ENCODE measurements at regions of chr1 and their contacts with region 1.

Region 1: GRCh38 chr1:241531195-241532161 is 700 bp upstream of the KMO start:
- DNase-seq: no peak
- H3K4me3 Mint-ChIP-seq: peak overlapping the region; percentile 94
- H3K27ac Mint-ChIP-seq: peak overlapping the region; percentile 94
- H3K4me1 Mint-ChIP-seq: peaks cover 22% of the 10 kb centered on the region
- H3K27me3 Mint-ChIP-seq: peaks cover 22% of the 10 kb centered on the region

Region 2: DNA sequence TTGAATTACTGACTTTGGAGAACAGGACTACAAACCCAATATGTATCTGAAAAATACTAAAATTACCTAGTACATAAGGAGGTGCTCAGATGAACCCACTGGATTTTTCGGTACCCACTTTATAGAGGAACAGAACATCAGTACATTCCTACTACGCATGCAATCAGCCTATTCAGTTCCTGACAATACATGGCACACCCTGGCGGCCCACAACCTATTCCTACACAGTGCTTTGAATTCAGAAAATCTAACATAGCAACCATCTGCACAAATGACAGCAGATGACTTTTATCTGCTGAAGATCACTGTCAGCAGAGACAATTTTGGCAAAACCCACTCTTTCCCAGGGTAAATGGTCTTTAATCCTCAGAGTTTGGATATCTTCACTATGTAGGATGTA is 662.4 kb before region 1 on chr1:
- intact Hi-C with region 1: no loop called
- DNase-seq: no peak
- H3K4me3 Mint-ChIP-seq: no peak overlapping the region
- H3K27ac Mint-ChIP-seq: no peak overlapping the region
- H3K4me1 Mint-ChIP-seq: no peaks in the 10 kb centered on the region
- H3K27me3 Mint-ChIP-seq: no peaks in the 10 kb centered on the region

Region 3: GRCh38 chr1:241519308-241520079 is 12.0 kb before region 1 on chr1 and contains the start of gene FH:
- intact Hi-C with region 1: loop called (anchors 2 kb)
- DNase-seq: peak; percentile 92
- H3K4me3 Mint-ChIP-seq: peak within 1 kb of the TSS; percentile 90
- H3K27ac Mint-ChIP-seq: peak within 1 kb of the TSS; percentile 79
- H3K4me1 Mint-ChIP-seq: peaks cover 21% of the 10 kb centered on the region
- H3K27me3 Mint-ChIP-seq: peaks cover 26% of the 10 kb centered on the region
- total RNA-seq, gene FH: 96.5 and 102 TPM in 2 replicates

Region 4: GRCh38 chr1:241592273-241592958 is 60.9 kb after region 1 on chr1:
- intact Hi-C with region 1: loop called (anchors 1 kb)
- DNase-seq: no peak
- H3K4me3 Mint-ChIP-seq: no peak overlapping the region
- H3K27ac Mint-ChIP-seq: peak overlapping the region; percentile 53
- H3K4me1 Mint-ChIP-seq: peaks cover 20% of the 10 kb centered on the region
- H3K27me3 Mint-ChIP-seq: no peaks in the 10 kb centered on the region

Region 5: GRCh38 chr1:241627453-241628259 is 96.2 kb after region 1 on chr1:
- intact Hi-C with region 1: loop called (anchors 1 kb)
- DNase-seq: no peak
- H3K4me3 Mint-ChIP-seq: peak overlapping the region; percentile 27
- H3K27ac Mint-ChIP-seq: peak overlapping the region; percentile 39
- H3K4me1 Mint-ChIP-seq: peaks cover 14% of the 10 kb centered on the region
- H3K27me3 Mint-ChIP-seq: no peaks in the 10 kb centered on the region

Region 6: DNA sequence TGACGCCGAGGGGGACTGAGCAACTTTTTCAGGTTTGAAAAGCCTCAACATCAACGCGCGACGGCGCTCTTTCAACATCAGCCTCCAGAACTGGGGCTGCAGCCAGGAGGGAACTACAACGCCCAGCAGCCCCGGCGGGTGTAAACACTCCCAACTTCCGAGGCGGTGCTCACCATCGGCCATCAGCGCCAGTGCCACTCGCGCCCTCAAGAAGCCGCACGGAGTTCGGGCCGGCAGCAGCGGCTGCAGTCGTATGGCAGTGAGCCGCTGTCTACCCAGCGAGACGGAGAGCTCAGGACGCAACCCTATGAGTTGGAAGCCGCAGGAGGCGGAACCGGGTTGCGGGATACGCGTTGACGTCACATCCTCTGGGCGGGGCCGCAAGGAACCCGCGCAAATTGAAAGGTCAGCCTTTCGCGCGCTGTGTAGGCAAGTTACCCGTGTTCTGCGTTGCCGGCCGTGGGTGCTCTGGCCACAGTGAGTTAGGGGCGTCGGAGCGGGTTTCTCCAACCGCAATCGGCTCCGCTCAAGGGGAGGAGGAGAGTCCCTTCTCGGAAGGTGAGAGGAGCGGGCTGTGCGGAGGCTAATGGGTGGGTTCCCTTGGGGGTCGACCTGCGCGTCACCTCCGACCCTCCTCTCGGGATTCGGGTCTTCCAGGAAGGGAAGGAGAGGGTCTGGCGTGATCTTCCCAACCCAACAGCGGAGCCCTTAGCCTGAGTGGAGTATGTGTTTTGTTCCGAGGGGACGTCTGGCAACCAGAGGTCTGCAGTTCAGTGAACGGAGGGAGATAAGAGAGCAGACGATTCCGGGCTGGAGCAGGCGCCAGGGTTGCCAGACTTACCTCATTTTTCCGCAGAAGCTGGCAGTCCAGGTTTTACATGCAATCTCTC is 316.6 kb after region 1 on chr1 and contains the start of gene EXO1:
- intact Hi-C with region 1: loop called (anchors 5 kb)
- DNase-seq: peak; percentile 86
- H3K4me3 Mint-ChIP-seq: peak within 1 kb of the TSS; percentile 98
- H3K27ac Mint-ChIP-seq: peak within 1 kb of the TSS; percentile 100
- H3K4me1 Mint-ChIP-seq: peaks cover 26% of the 10 kb centered on the region
- H3K27me3 Mint-ChIP-seq: peaks cover 7% of the 10 kb centered on the region
- total RNA-seq, gene EXO1: 49.2 and 52.5 TPM in 2 replicates

Region 7: DNA sequence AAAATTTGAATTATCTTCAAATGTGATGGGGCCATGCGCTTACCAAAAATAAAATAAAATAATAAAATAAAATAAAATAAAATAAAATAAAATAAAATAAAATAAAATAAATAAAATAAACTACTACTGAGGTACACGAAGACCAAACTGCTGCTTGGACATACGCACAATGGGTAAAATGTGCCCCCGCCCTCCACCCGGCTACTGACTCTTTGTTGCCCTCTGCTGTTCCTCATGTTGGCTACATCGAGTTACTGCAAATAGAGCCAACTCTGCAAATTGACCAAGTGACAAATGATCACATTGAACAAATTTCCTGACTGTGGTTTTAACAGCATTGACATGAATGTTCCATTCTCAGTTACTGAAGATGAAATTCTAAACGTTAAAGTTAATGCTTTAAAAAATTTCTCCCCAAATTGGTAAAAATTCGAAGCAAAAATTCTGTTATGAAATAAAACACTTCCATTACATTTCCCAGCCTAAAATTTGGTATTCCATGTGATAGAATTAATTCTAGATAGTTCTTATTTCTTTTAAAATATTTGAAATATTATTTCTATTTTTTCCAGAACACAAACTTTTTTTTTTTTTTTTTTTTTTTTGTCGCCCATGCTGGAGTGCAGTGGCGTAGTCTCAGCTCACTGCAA is 486.2 kb after region 1 on chr1:
- intact Hi-C with region 1: loop called (anchors 5 kb)
- DNase-seq: no peak
- H3K4me3 Mint-ChIP-seq: no peak overlapping the region
- H3K27ac Mint-ChIP-seq: no peak overlapping the region
- H3K4me1 Mint-ChIP-seq: no peaks in the 10 kb centered on the region
- H3K27me3 Mint-ChIP-seq: no peaks in the 10 kb centered on the region